ENCODE measurements at regions of chr12 and their contacts with region 1.

Region 1: GRCh38 chr12:40436564-40436963 is 211.8 kb downstream of the LRRK2 start:
- DNase-seq: no peak
- H3K4me3 ChIP-seq: no peak overlapping the region
- H3K27ac ChIP-seq: no peak overlapping the region
- H3K4me1 ChIP-seq: peaks cover 9% of the 10 kb centered on the region
- H3K27me3 ChIP-seq: no peaks in the 10 kb centered on the region
- CTCF ChIP-seq: no peak

Region 2: DNA sequence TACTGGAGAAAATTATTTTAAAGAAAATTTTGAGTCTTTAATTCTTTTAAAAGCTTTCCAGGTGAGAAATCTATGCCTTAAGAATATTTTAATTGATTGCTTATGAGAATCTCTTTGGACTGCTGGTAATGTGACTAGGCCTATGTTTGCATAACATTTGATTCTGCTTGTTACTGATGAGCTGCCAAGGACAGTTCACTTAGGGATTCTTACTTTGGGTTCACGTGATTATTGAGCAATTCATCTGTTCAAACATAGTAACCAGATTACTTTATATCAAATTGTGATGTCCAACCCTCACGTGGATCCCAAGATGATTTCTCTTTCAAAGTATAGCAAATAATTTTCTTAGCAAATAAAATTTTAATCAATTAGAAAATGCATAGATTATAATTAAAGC is 789.6 kb before region 1 on chr12:
- CTCF ChIA-PET with region 1: no interaction called
- dilution Hi-C with region 1: no loop called
- in situ Hi-C with region 1: no loop called
- intact Hi-C with region 1: no loop called
- DNase-seq: no peak
- H3K4me3 ChIP-seq: no peak overlapping the region
- H3K27ac ChIP-seq: no peak overlapping the region
- H3K4me1 ChIP-seq: no peaks in the 10 kb centered on the region
- H3K27me3 ChIP-seq: no peaks in the 10 kb centered on the region
- CTCF ChIP-seq: no peak

Region 3: DNA sequence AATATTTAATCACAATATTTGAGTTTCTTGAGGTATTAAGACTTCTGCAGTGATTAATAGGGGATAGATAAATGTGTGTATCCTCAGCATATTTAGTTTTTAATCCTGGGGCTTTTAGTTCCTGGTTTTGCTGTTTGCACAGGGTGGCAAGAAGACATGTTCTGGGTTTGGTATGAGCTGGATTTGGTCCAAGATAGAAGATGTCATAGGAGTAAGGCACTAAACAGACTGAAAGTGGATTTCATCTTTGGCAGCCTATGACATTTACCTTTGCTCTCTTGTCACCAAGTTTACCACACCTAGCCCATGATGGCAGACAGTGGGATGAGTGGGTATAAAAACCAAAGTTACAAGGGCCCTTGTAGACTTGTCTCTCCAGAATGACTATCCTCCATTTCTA is 43.5 kb before region 1 on chr12:
- CTCF ChIA-PET with region 1: no interaction called
- dilution Hi-C with region 1: no loop called
- in situ Hi-C with region 1: no loop called
- intact Hi-C with region 1: loop called (anchors 1 kb)
- DNase-seq: no peak
- H3K4me3 ChIP-seq: no peak overlapping the region
- H3K27ac ChIP-seq: no peak overlapping the region
- H3K4me1 ChIP-seq: no peaks in the 10 kb centered on the region
- H3K27me3 ChIP-seq: no peaks in the 10 kb centered on the region
- CTCF ChIP-seq: no peak

Region 4: DNA sequence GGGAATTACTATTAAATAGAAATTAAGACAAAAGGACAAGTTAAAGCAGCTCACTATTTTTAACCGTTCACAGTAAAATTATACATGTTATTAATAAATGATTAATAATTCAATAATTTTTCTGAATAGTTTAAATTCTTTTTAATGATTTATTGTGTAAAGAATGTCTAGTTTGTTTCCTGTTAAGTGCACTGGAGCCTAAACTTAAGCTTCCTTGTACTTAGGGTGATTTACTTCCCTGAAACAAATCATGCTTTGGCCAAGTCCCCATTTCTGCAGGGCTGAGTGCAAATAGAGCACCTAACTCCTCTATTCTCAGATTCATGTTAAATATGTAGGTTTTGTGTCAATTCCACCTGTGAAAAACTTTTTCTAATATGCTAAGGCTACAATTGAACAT is 562.6 kb after region 1 on chr12:
- CTCF ChIA-PET with region 1: interaction called, 10 read pairs
- dilution Hi-C with region 1: no loop called
- in situ Hi-C with region 1: no loop called
- intact Hi-C with region 1: no loop called
- DNase-seq: no peak
- H3K4me3 ChIP-seq: no peak overlapping the region
- H3K27ac ChIP-seq: no peak overlapping the region
- H3K4me1 ChIP-seq: no peaks in the 10 kb centered on the region
- H3K27me3 ChIP-seq: no peaks in the 10 kb centered on the region
- CTCF ChIP-seq: no peak